ENCODE measurements at regions of chr3 and their contacts with region 1.

Region 1: GRCh38 chr3:155854141-155854940 is at the start of gene SLC33A1:
- DNase-seq: peak; percentile 97
- ATAC-seq: peak; percentile 91
- H3K4me3 Mint-ChIP-seq: peak within 1 kb of the TSS; percentile 98
- H3K27ac Mint-ChIP-seq: peak within 1 kb of the TSS; percentile 98
- H3K4me1 Mint-ChIP-seq: peaks cover 41% of the 10 kb centered on the region
- H3K27me3 Mint-ChIP-seq: no peaks in the 10 kb centered on the region
- CTCF ChIP-seq: no peak
- total RNA-seq, gene SLC33A1: 19.8 and 23.3 TPM in 2 replicates

Region 2: GRCh38 chr3:154323891-154324738 is 1530.2 kb before region 1 on chr3 and contains the start of gene DHX36:
- CTCF ChIA-PET with region 1: no interaction called
- POLR2A ChIA-PET with region 1: interaction called, 3 read pairs
- intact Hi-C with region 1: loop called (anchors 1 kb)
- DNase-seq: peak; percentile 83
- ATAC-seq: peak; percentile 88
- H3K4me3 Mint-ChIP-seq: peak within 1 kb of the TSS; percentile 95
- H3K27ac Mint-ChIP-seq: peak within 1 kb of the TSS; percentile 97
- H3K4me1 Mint-ChIP-seq: peaks cover 31% of the 10 kb centered on the region
- H3K27me3 Mint-ChIP-seq: no peaks in the 10 kb centered on the region
- CTCF ChIP-seq: no peak
- total RNA-seq, gene DHX36: 95.9 and 110 TPM in 2 replicates

Region 3: DNA sequence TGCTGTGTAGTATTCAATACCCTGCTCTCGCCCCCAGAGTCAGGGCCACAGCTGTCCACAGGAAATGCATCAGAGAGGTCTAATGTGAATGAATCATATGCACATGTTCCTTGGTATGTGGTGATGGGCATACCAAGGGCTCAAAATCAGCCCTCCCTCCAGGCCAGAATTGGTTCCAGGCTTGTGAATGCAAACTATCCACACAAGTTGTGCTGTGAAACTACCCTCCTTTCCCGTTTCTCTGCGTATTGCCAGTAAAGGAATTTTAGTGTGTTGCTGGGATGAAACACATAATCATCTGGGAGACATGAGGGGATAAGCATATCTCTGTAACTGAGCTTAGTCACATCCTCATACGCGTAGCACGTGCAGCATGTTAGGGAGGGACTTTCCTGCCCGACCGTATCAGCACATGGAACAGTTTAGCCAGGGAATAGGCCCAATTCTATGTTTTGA is 783.4 kb before region 1 on chr3:
- CTCF ChIA-PET with region 1: no interaction called
- POLR2A ChIA-PET with region 1: no interaction called
- intact Hi-C with region 1: no loop called
- DNase-seq: no peak
- ATAC-seq: no peak
- H3K4me3 Mint-ChIP-seq: no peak overlapping the region
- H3K27ac Mint-ChIP-seq: no peak overlapping the region
- H3K4me1 Mint-ChIP-seq: no peaks in the 10 kb centered on the region
- H3K27me3 Mint-ChIP-seq: no peaks in the 10 kb centered on the region
- CTCF ChIP-seq: no peak

Region 4: GRCh38 chr3:155730847-155731246 is 123.5 kb before region 1 on chr3:
- CTCF ChIA-PET with region 1: no interaction called
- POLR2A ChIA-PET with region 1: no interaction called
- intact Hi-C with region 1: no loop called
- DNase-seq: no peak
- ATAC-seq: no peak
- H3K4me3 Mint-ChIP-seq: no peak overlapping the region
- H3K27ac Mint-ChIP-seq: no peak overlapping the region
- H3K4me1 Mint-ChIP-seq: no peaks in the 10 kb centered on the region
- H3K27me3 Mint-ChIP-seq: peaks cover 2% of the 10 kb centered on the region
- CTCF ChIP-seq: no peak

Region 5: DNA sequence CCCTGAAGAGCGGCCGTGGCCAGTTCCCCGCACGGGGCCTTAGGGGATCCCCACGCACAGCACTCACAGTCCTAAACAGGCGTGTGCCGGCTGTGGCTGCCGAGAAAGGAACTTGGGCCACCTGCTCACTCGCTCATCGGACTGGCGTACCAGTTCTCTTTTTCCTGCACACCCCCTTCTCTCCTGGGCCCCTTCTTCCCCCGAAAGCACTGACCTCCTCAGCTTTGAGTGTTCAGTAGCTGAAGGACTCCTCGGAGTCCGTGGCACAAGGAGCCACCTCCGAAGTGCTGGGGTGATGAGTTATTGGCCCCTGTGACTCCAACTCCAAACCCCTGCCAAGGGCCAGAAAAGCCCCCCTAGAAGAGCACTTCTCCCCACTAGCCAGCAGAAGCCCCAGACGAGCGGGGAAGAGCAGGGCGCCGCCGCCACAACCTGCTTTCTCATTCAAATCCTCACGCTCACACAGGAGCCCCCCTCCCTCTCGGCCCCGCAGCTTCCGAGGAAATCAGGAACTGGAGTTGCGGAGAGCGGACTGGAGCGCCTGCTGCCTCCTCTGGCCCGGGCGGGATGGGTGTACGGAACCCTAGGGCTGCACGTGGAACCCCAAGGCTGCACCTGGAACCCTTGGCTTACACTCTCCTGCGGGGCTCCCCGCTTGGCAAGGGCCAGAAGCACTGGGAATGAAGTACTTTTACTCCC is 109.6 kb before region 1 on chr3 and contains the start of gene PLCH1:
- CTCF ChIA-PET with region 1: no interaction called
- POLR2A ChIA-PET with region 1: no interaction called
- intact Hi-C with region 1: loop called (anchors 1 kb)
- DNase-seq: peak; percentile 20
- ATAC-seq: peak; percentile 81
- H3K4me3 Mint-ChIP-seq: peak within 1 kb of the TSS; percentile 87
- H3K27ac Mint-ChIP-seq: peak within 1 kb of the TSS; percentile 66
- H3K4me1 Mint-ChIP-seq: peaks cover 25% of the 10 kb centered on the region
- H3K27me3 Mint-ChIP-seq: peaks cover 20% of the 10 kb centered on the region
- CTCF ChIP-seq: no peak
- total RNA-seq, gene PLCH1: 0.12 and 0.27 TPM in 2 replicates

Region 6: GRCh38 chr3:155870133-155870944 is 16.0 kb after region 1 on chr3 and contains the start of gene GMPS:
- CTCF ChIA-PET with region 1: interaction called, 5 read pairs
- POLR2A ChIA-PET with region 1: interaction called, 36 read pairs
- intact Hi-C with region 1: loop called (anchors 1 kb)
- DNase-seq: peak; percentile 97
- ATAC-seq: peak; percentile 92
- H3K4me3 Mint-ChIP-seq: peak within 1 kb of the TSS; percentile 92
- H3K27ac Mint-ChIP-seq: peak within 1 kb of the TSS; percentile 93
- H3K4me1 Mint-ChIP-seq: peaks cover 18% of the 10 kb centered on the region
- H3K27me3 Mint-ChIP-seq: no peaks in the 10 kb centered on the region
- CTCF ChIP-seq: no peak
- total RNA-seq, gene GMPS: 42.2 and 45.1 TPM in 2 replicates

Region 7: GRCh38 chr3:156826144-156826895 is 972.0 kb after region 1 on chr3 and contains the start of gene LEKR1:
- CTCF ChIA-PET with region 1: no interaction called
- POLR2A ChIA-PET with region 1: no interaction called
- intact Hi-C with region 1: loop called (anchors 5 kb)
- DNase-seq: peak; percentile 74
- ATAC-seq: peak; percentile 73
- H3K4me3 Mint-ChIP-seq: peak within 1 kb of the TSS; percentile 90
- H3K27ac Mint-ChIP-seq: peak within 1 kb of the TSS; percentile 96
- H3K4me1 Mint-ChIP-seq: peaks cover 21% of the 10 kb centered on the region
- H3K27me3 Mint-ChIP-seq: no peaks in the 10 kb centered on the region
- CTCF ChIP-seq: no peak
- total RNA-seq, gene LEKR1: 2.8 and 2.9 TPM in 2 replicates

Region 8: GRCh38 chr3:157088601-157089454 is 1234.5 kb after region 1 on chr3:
- CTCF ChIA-PET with region 1: no interaction called
- POLR2A ChIA-PET with region 1: no interaction called
- intact Hi-C with region 1: loop called (anchors 2 kb)
- DNase-seq: peak; percentile 92
- ATAC-seq: peak; percentile 92
- H3K4me3 Mint-ChIP-seq: peak overlapping the region; percentile 90
- H3K27ac Mint-ChIP-seq: peak overlapping the region; percentile 90
- H3K4me1 Mint-ChIP-seq: peaks cover 26% of the 10 kb centered on the region
- H3K27me3 Mint-ChIP-seq: peaks cover 1% of the 10 kb centered on the region
- CTCF ChIP-seq: no peak